BJ (cell line): ENCODE measurements at regions of chr13 and their contacts with region 1.

Region 1: GRCh38 chr13:99119686-99120085 is 81.0 kb upstream of the UBAC2 start:
- DNase-seq: no peak
- H3K4me3 ChIP-seq: no peak overlapping the region
- H3K27me3 ChIP-seq: no peaks in the 10 kb centered on the region
- CTCF ChIP-seq: no peak

Region 2: DNA sequence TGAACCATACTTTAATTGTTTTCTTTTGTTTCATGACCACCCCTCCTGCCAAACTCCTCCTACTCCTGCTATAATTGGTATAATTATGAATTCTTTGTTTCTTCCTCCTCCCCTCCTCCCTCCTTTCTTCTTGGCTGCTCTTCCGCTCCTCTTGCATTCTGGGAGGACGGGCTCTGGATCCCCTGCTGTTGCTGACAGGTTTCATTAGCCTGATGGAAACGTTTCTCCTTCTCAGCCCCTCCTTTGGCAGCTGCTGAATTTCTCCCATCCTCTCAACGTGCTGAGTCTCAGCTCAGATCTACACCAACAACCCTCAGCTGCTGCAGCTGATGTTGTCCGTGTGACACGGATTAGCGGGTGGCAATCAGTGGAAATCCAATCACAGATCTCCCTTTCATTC is 16.1 kb before region 1 on chr13:
- CTCF ChIA-PET with region 1: no interaction called
- POLR2A ChIA-PET with region 1: interaction called, 10 read pairs
- DNase-seq: no peak
- H3K4me3 ChIP-seq: no peak overlapping the region
- H3K27me3 ChIP-seq: peaks cover 5% of the 10 kb centered on the region; the same call in 1 of the 2 replicates
- CTCF ChIP-seq: no peak